CD14-positive monocyte (primary cell): ENCODE measurements at regions of chr12 and their contacts with region 1.

Region 1: DNA sequence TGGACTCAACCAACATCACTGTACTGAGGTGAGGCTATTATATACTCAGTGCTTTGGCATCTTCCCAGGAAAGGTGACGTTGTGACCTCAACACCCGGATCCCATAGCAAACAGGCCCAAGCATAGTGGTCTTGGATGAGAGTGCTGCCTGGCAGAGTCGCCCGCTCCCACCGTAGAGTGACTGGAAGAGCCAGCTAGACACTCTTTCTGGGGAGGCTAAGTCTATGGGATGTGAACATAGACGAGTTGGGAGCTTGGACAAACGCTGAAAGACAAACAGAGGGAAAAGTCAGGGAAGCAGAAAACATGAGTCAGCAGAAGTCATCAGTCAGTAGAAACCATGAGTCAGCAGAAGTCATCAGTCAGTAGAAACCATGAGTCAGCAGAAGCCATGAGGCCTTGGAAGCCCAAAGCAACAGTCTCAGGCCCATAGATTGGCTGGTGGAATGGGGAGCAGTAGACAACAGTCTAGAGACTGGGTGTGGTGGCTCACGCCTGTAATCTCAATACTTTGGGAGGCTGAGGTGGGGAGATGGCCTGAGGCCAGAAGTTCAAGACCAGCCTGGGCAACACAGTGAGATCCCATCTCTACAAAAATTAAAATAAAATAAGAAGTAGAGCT is 66.4 kb upstream of the MAP1LC3B2 start:
- DNase-seq: peak in 2 of 3 donors; percentile 52 to 69
- H3K4me3 ChIP-seq: no peak overlapping the region
- H3K4me3 Mint-ChIP-seq: no peak overlapping the region
- H3K27ac ChIP-seq: no peak overlapping the region
- H3K27ac Mint-ChIP-seq: peak overlapping the region in 4 of 7 donors; percentile 2 to 57 (median 24)
- H3K4me1 ChIP-seq: peaks cover 8 to 11% of the 10 kb centered on the region in 2 donors
- H3K4me1 Mint-ChIP-seq: peaks cover 22% of the 10 kb centered on the region
- H3K27me3 ChIP-seq: no peaks in the 10 kb centered on the region
- H3K27me3 Mint-ChIP-seq: peaks cover 0 to 6% (median 4%) of the 10 kb centered on the region in 3 donors
- CTCF ChIP-seq: no peak

Region 2: GRCh38 chr12:116426391-116427136 is 66.2 kb before region 1 on chr12:
- intact Hi-C with region 1: loop called in 1 of 2 experiments (anchors 10 kb)
- DNase-seq: no peak
- H3K4me3 ChIP-seq: no peak overlapping the region
- H3K4me3 Mint-ChIP-seq: no peak overlapping the region
- H3K27ac ChIP-seq: no peak overlapping the region
- H3K27ac Mint-ChIP-seq: no peak overlapping the region
- H3K4me1 ChIP-seq: peaks cover 0 to 3% of the 10 kb centered on the region in 2 donors
- H3K4me1 Mint-ChIP-seq: peaks cover 5% of the 10 kb centered on the region
- H3K27me3 ChIP-seq: no peaks in the 10 kb centered on the region
- H3K27me3 Mint-ChIP-seq: peaks cover 0 to 4% (median 4%) of the 10 kb centered on the region in 3 donors
- CTCF ChIP-seq: no peak

Region 3: GRCh38 chr12:116577154-116577561 is 84.3 kb after region 1 on chr12:
- intact Hi-C with region 1: no loop called
- DNase-seq: no peak
- H3K4me3 ChIP-seq: no peak overlapping the region
- H3K4me3 Mint-ChIP-seq: no peak overlapping the region
- H3K27ac ChIP-seq: no peak overlapping the region
- H3K27ac Mint-ChIP-seq: no peak overlapping the region
- H3K4me1 ChIP-seq: peaks cover 4 to 10% of the 10 kb centered on the region in 2 donors
- H3K4me1 Mint-ChIP-seq: peaks cover 11% of the 10 kb centered on the region
- H3K27me3 ChIP-seq: no peaks in the 10 kb centered on the region
- H3K27me3 Mint-ChIP-seq: peaks cover 0 to 2% (median under 1%) of the 10 kb centered on the region in 3 donors
- CTCF ChIP-seq: no peak

Region 4: GRCh38 chr12:117084405-117085317 is 591.8 kb after region 1 on chr12:
- intact Hi-C with region 1: no loop called
- DNase-seq: no peak
- H3K4me3 ChIP-seq: no peak overlapping the region
- H3K4me3 Mint-ChIP-seq: no peak overlapping the region
- H3K27ac ChIP-seq: peak overlapping the region in 1 of 2 donors; percentile 47
- H3K27ac Mint-ChIP-seq: peak overlapping the region in 3 of 7 donors; percentile 28 to 42 (median 36)
- H3K4me1 ChIP-seq: no peaks in the 10 kb centered on the region
- H3K4me1 Mint-ChIP-seq: peaks cover 10% of the 10 kb centered on the region
- H3K27me3 ChIP-seq: no peaks in the 10 kb centered on the region
- H3K27me3 Mint-ChIP-seq: peaks cover 0 to 3% (median 0%) of the 10 kb centered on the region in 3 donors
- CTCF ChIP-seq: no peak